Right ventricle myocardium inferior (tissue), 1 donor: ENCODE measurements at regions of chr19 and their contacts with region 1.

Region 1: GRCh38 chr19:1605236-1606137 is at the start of gene UQCR11:
- DNase-seq: peak; percentile 97
- ATAC-seq: peak; percentile 96
- total RNA-seq, gene UQCR11: 1,146 TPM

Region 2: GRCh38 chr19:1652471-1653299 is 47.2 kb after region 1 on chr19 and contains the start of gene TCF3:
- intact Hi-C with region 1: loop called (anchors 2 kb)
- DNase-seq: peak; percentile 99
- ATAC-seq: peak; percentile 99
- total RNA-seq, gene TCF3: 25.3 TPM

Region 3: DNA sequence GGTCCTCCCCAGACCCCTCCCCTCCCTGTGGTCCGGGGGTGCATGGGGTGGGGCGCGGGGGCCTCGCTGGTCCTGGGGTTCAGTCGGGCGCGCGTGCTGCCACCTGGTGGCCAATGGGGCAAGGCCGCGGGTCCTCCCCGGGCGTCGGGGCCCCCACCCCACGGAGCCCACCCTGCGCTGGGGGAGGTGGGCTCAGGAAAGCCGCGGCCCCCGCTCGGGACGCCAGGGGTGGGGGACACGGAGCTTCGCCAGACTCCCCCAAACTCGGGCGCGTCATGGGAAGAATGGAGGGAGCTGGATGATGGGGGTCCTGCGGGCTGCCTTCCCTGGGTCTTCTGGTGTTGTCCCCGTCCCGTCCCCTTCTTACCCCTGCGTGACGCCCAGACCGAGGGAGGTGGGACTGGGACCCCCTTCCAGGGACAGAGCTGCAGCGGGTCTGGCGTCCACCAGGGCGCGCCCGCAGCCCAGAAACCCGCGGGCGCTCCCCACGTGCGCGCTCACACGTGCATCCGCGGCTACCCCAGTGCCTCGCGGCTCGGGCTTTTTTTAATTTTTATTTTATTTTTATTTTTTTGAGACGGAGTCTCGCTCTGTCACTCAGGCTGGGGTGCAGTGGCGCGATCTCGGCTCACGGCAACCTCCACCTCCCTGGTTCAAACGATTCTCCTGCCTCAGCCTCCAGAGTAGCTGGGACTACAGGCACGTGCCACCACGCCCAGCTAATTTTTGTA is 66.7 kb after region 1 on chr19:
- intact Hi-C with region 1: loop called (anchors 5 kb)
- DNase-seq: peak; percentile 77
- ATAC-seq: peak; percentile 50

Region 4: DNA sequence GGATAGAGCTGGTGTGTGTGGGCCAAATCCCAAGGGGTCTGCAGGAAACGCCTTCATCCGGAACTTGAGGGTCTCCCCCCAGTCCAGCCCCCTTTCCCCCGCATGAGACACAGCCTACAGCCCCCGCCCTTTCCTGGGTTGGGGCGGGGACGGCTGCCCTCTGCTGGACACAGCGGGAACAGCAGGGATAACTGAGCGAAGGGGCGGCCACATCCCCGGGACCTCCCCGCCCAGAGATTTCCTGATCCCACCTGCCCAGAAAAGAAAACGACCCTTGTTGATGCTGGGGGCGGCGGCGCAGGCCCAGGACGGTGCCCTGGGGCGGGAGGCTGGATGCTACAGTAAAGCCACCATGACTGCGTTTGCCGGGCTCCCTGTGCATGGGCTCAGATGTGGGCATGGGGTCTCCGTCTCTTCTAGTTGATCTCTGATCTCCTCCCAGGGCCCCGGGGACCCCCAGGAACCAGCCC is 162.0 kb after region 1 on chr19:
- intact Hi-C with region 1: no loop called
- DNase-seq: peak; percentile 77
- ATAC-seq: peak; percentile 48